B cell (primary cell): ENCODE measurements at regions of chr16 and their contacts with region 1.

Region 1: DNA sequence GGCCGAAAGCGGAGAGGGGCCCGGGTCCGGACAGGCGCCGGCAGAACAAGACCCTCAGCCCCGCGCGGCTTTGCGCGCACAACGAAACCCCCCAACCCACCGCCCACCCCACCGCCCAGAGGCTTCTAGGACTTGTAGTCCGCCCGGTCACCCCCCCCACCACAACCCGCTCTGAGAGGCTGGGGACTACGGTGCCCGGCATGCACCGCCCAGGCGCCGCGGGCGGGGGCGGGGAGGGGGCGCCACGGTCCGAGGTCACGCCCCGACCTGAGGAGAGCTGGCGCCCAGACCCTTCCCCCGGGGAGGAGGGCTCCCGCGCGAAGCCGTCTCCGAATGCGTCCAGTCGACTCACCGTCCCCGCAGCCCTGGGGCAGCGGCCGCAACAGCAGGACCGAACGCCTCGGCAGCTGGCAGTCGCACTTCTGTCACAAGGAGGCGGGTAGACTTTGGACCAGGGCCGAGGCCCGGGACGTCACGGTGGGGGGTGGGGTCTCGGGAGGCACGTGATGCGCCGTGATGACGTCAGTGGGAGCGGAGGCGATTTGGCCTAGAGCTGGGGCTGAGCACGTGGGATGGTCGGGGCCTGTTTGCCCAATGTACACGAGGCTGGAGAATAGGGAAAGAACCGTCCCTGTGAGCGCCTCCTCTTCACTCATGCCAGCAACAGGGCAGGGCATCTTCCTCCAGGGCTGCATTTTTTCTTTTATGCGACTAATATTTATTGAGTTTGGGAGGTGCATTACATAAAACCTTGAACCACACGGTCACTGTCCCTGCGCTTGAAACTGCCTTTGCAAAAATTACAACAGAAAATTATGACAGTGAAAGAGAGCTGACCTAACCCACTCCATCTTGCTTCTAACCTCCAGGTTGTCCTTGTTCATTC is at the start of gene CDIP1:
- DNase-seq: peak; percentile 99
- ATAC-seq: peak; percentile 91
- H3K4me3 ChIP-seq: peak within 1 kb of the TSS; percentile 7 to 93 (median 73)
- H3K4me3 Mint-ChIP-seq: peak within 1 kb of the TSS; percentile 92
- H3K27ac ChIP-seq: peak within 1 kb of the TSS; percentile 87 to 95
- H3K27ac Mint-ChIP-seq: peak within 1 kb of the TSS; percentile 96
- H3K4me1 ChIP-seq: peaks cover 7 to 13% of the 10 kb centered on the region in 2 donors
- H3K4me1 Mint-ChIP-seq: peaks cover 14% of the 10 kb centered on the region
- H3K27me3 ChIP-seq: no peaks in the 10 kb centered on the region
- H3K27me3 Mint-ChIP-seq: no peaks in the 10 kb centered on the region
- CTCF ChIP-seq: peak; percentile 24
- total RNA-seq, gene CDIP1: 18.0 and 20.3 TPM in 2 replicates

Region 2: DNA sequence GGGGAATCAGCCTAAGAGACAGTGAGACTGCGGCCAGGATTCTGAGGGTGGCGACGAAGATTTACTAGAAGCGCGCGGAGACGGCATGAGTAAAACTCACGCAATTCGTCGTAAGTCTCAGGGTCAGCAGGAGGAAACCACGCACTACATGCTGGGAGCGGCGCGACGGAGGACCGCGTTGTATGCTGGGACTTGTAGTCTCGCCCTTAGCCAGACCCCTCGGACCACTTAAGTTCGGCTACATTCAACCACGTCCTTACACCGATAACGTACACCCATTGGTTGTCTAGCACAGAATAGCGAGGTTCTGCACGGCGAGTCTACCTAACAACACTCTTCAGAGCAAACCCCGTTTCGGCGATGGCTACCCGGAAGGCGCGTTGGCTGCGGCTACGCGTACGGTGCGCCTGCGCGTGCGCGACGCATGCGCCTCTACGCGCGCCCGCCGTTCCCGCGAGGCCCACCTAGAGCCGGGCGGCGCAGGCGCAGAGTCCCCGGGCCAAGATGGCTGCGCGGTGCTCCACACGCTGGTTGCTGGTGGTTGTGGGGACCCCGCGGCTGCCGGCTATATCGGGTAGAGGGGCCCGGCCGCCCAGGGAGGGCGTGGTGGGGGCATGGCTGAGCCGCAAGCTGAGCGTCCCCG is 113.1 kb before region 1 on chr16 and contains the start of gene DNAJA3:
- CTCF ChIA-PET with region 1: no interaction called
- POLR2A ChIA-PET with region 1: no interaction called
- intact Hi-C with region 1: loop called (anchors 1 kb)
- DNase-seq: peak; percentile 98
- ATAC-seq: peak; percentile 92
- H3K4me3 ChIP-seq: peak within 1 kb of the TSS; percentile 80 to 99 (median 89)
- H3K4me3 Mint-ChIP-seq: peak within 1 kb of the TSS; percentile 97
- H3K27ac ChIP-seq: peak within 1 kb of the TSS; percentile 93 to 96
- H3K27ac Mint-ChIP-seq: peak within 1 kb of the TSS; percentile 100
- H3K4me1 ChIP-seq: peaks cover 14 to 20% of the 10 kb centered on the region in 2 donors
- H3K4me1 Mint-ChIP-seq: peaks cover 25% of the 10 kb centered on the region
- H3K27me3 ChIP-seq: no peaks in the 10 kb centered on the region
- H3K27me3 Mint-ChIP-seq: no peaks in the 10 kb centered on the region
- CTCF ChIP-seq: no peak
- total RNA-seq, gene DNAJA3: 59.3 and 68.1 TPM in 2 replicates

Region 3: DNA sequence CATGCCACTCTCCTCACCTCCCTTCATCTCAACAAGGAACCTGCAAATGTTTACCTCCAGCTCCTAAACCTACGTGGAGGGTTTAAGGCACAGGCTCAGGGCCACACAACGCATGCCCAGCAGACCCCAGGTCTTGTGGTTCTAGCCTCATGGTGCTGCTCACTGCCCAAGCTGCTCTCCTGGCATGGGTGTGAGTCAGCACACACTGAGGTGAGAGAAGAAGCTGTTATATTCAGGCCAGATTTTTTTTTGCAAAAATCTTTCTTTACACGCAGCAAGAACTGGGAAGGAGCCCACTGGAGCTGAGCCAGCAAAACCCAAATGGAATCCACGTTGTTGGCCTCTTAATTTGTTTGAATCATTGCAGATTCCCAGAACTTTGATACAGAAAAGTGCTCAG is 12.0 kb after region 1 on chr16:
- CTCF ChIA-PET with region 1: interaction called, 12 read pairs
- POLR2A ChIA-PET with region 1: interaction called, 4 read pairs
- intact Hi-C with region 1: loop called (anchors 1 kb)
- DNase-seq: no peak
- ATAC-seq: no peak
- H3K4me3 ChIP-seq: no peak overlapping the region
- H3K4me3 Mint-ChIP-seq: no peak overlapping the region
- H3K27ac ChIP-seq: no peak overlapping the region
- H3K27ac Mint-ChIP-seq: peak overlapping the region; percentile 53
- H3K4me1 ChIP-seq: peaks cover 0 to 9% of the 10 kb centered on the region in 2 donors
- H3K4me1 Mint-ChIP-seq: peaks cover 3% of the 10 kb centered on the region
- H3K27me3 ChIP-seq: no peaks in the 10 kb centered on the region
- H3K27me3 Mint-ChIP-seq: peaks cover 6% of the 10 kb centered on the region
- CTCF ChIP-seq: no peak

Region 4: GRCh38 chr16:4609200-4610010 is 70.8 kb after region 1 on chr16:
- CTCF ChIA-PET with region 1: no interaction called
- POLR2A ChIA-PET with region 1: interaction called, 10 read pairs
- intact Hi-C with region 1: loop called (anchors 1 kb)
- DNase-seq: no peak
- ATAC-seq: no peak
- H3K4me3 ChIP-seq: no peak overlapping the region
- H3K4me3 Mint-ChIP-seq: no peak overlapping the region
- H3K27ac ChIP-seq: no peak overlapping the region
- H3K27ac Mint-ChIP-seq: no peak overlapping the region
- H3K4me1 ChIP-seq: peaks cover 12 to 17% of the 10 kb centered on the region in 2 donors
- H3K4me1 Mint-ChIP-seq: peaks cover 9% of the 10 kb centered on the region
- H3K27me3 ChIP-seq: no peaks in the 10 kb centered on the region
- H3K27me3 Mint-ChIP-seq: no peaks in the 10 kb centered on the region
- CTCF ChIP-seq: no peak